GM12878 (cell line): ENCODE measurements at regions of chr2 and their contacts with region 1.

Region 1: DNA sequence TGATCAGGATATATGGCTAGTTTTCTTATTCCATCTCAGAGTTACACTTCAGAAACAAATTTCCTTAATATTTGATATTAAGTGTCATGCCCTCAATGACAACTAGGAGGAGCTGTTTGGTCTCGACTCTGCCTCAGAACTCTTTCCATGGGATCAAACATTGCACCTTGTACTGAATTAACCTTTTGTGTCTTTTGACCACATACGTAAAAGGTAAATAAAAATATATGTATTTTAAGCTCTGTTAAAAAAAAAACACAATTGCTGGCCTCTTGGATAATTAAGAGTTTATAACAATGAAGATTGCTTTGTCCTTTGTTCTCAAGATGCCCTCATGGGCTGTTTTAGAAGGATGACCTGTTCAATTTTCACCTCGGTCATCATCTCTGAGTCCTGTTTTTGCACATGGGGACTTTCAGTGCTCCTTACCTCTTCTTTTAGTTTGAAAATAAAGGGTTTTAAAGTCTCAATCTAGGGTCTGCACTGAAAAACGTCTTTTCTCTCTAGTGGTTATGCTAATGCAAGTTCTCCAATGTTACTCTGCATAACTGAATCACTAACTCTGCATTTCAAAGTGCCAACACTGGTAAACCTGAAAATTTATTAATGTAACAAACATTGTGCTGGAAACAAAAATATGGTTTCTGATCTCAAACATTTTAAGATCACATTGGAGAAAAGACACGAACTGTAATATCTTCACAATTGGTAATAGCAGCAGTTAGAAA is 18.8 kb upstream of the FN1 start:
- DNase-seq: no peak
- ATAC-seq: peak; percentile 67
- H3K4me3 ChIP-seq: no peak overlapping the region
- H3K27ac ChIP-seq: no peak overlapping the region
- H3K4me1 ChIP-seq: no peaks in the 10 kb centered on the region
- H3K27me3 ChIP-seq: no peaks in the 10 kb centered on the region
- CTCF ChIP-seq: peak; percentile 71 to 81 (median 71)
- EP300 ChIP-seq: no peak
- POLR2A ChIP-seq: no peak
- RAD21 ChIP-seq: peak; percentile 77

Region 2: GRCh38 chr2:215442404-215442794 is 12.3 kb before region 1 on chr2:
- CTCF ChIA-PET with region 1: interaction called, 5 read pairs
- POLR2A ChIA-PET with region 1: no interaction called
- RAD21 ChIA-PET with region 1: interaction called, 3 read pairs
- SMC1A ChIA-PET with region 1: interaction called, 27 read pairs
- in situ Hi-C with region 1: no loop called
- intact Hi-C with region 1: no loop called
- DNase-seq: no peak
- ATAC-seq: peak; percentile 69
- H3K4me3 ChIP-seq: no peak overlapping the region
- H3K27ac ChIP-seq: no peak overlapping the region
- H3K4me1 ChIP-seq: no peaks in the 10 kb centered on the region
- H3K27me3 ChIP-seq: peaks cover 0 to 4% of the 10 kb centered on the region in 2 experiments; a peak in 2 of 4 replicates
- CTCF ChIP-seq: 0 out of 6 replicates have a peak, but pooled peaks of 1 of the 3 experiments have one; percentile 16
- EP300 ChIP-seq: no peak
- POLR2A ChIP-seq: no peak
- RAD21 ChIP-seq: 0 out of 2 replicates have a peak, but pooled peaks have one; percentile 12

Region 3: GRCh38 chr2:215664847-215665525 is 210.3 kb after region 1 on chr2:
- CTCF ChIA-PET with region 1: interaction called, 5 read pairs
- POLR2A ChIA-PET with region 1: no interaction called
- RAD21 ChIA-PET with region 1: no interaction called
- SMC1A ChIA-PET with region 1: interaction called, 7 read pairs
- in situ Hi-C with region 1: no loop called
- intact Hi-C with region 1: loop called (anchors 10 kb)
- DNase-seq: peak; percentile 63
- ATAC-seq: peak; percentile 93
- H3K4me3 ChIP-seq: no peak overlapping the region
- H3K27ac ChIP-seq: no peak overlapping the region
- H3K4me1 ChIP-seq: no peaks in the 10 kb centered on the region
- H3K27me3 ChIP-seq: no peaks in the 10 kb centered on the region; a peak in 1 of 4 replicates
- CTCF ChIP-seq: no peak
- EP300 ChIP-seq: peak in 1 of 2 experiments; percentile 62; a peak in 1 of 4 replicates
- POLR2A ChIP-seq: no peak
- RAD21 ChIP-seq: no peak

Region 4: DNA sequence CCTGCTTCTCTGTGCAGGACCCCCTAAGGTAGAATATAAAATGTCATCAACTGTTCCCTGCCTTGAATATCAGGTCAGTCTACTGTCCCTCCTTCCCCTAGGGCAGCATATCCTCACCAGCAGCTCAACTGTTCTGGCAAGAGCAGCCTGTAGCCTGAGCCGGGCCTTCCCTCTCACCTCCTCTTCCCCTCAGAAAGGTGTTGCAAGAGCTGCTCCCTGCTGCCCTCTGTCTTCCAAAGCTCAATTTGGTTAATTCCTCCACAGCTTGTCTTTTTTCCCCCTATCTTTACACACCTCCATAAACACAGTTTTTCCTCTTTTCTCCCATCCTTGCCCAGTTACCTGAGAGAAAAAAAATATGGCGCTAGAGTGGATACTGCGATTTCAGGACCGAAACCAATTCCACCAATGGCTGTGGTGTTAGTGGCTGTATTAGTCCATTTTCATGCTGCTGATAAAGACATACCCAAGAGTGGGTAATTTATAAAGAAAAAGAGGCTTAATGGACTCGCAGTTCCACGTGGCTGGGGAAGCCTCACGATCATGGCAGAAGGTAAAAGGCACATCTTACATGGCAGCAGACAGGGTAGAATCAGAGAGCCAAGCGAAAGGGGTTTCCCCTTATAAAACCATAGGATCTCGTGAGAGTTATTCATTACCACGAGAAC is 374.0 kb after region 1 on chr2:
- CTCF ChIA-PET with region 1: interaction called, 29 read pairs
- POLR2A ChIA-PET with region 1: no interaction called
- RAD21 ChIA-PET with region 1: interaction called, 12 read pairs
- SMC1A ChIA-PET with region 1: interaction called, 10 read pairs
- in situ Hi-C with region 1: no loop called
- intact Hi-C with region 1: loop called (anchors 5 kb)
- DNase-seq: no peak
- ATAC-seq: peak; percentile 80
- H3K4me3 ChIP-seq: no peak overlapping the region
- H3K27ac ChIP-seq: no peak overlapping the region
- H3K4me1 ChIP-seq: peaks cover 5% of the 10 kb centered on the region
- H3K27me3 ChIP-seq: no peaks in the 10 kb centered on the region
- CTCF ChIP-seq: peak; percentile 54 to 73 (median 68)
- EP300 ChIP-seq: no peak
- POLR2A ChIP-seq: no peak
- RAD21 ChIP-seq: peak; percentile 80